HepG2 (cell line): ENCODE measurements at regions of chr16 and their contacts with region 1.

Region 1: DNA sequence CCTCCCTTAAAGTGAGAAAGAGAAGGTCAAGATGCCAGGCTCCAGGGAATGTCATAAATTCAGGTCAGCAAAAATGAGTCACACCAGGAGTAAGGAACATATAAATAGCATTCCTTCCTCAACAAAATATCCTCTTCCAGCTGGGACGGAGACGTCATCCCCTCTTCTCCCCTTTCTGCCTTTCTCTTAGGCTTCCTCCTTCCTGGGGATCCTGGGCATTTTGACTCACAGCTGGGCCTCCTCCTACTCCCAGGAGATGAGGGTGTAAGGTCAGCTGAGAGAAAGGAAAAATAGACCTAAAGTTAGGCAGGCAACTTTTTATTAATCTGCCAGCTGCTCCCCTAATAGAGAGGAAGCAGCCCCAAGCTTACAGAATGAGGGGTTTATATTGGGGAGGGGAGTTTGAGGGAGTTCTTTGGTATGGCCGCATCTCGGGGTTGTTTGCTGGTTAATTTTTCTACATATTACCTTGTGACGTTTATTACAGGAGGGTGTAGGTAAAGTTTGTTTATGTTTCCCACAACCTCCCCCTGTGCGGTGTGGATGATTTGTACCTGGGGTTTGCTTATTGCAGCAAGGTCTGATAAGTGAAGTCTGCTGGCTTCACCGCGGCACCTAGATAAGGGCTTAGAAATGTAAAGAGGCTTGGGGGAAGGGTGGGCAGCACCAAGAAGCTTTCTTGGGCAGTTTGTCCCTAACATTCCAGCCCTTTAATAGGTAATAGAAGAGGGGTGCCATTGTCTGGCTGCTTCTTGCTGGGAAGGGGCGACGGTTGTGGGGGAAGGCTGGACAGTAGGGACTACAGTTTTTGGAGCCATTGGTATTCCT is 7.1 kb upstream of the ZNF747 start:
- DNase-seq: peak; percentile 47
- ATAC-seq: peak; percentile 43
- H3K4me3 ChIP-seq: peak overlapping the region; percentile 48 to 63 (median 58)
- H3K27ac ChIP-seq: peak overlapping the region; percentile 62
- H3K4me1 ChIP-seq: peaks cover 72% of the 10 kb centered on the region
- H3K27me3 ChIP-seq: no peaks in the 10 kb centered on the region
- CTCF ChIP-seq: no peak
- EP300 ChIP-seq: no peak; a peak in 1 of 4 replicates
- POLR2A ChIP-seq: 0 out of 4 replicates have a peak, but pooled peaks of 1 of the 2 experiments have one; percentile 15
- RAD21 ChIP-seq: no peak

Region 2: DNA sequence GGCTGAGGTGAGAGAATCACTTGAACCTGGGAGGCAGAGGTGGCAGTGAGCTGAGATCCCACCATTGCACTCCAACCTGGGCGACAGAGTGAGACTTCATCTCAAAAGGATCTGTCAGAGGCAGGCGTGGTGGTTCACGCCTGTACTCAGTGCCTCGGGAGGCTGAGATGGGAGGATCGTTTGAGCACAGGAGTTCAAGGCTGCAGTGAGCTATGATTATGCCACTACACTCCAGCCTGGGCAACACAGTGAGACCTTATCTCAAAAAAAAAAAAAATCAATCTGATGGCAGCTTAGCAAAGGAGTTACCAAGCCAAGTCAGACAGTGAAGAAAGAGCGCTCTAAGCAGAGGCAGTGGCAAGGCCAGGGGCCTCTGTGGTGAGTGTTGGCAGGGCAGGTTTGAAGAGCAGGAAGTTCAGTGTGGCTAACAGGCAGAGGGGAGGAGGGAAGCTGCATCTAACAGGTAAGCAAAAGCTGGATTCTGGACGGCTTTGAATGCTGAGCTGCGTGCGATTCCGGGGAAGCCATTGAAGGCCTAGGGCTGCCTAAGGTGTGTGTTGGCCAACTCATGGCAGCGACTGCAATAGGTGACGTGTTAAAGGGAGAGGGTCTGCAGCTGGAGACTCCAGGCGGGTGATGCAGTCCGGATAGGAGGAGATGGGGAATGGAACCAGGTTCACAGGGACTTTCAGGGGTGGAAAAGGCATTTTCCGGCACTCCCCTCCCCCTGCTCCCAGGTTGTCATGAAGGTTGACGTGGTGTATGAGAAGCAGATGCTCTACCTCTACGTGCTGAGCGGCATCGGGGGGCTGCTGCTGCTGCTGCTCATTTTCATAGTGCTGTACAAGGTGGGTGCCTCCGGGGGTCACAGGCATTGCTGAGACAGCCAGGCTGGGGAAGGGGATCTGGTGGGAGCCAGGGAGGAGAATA is 22.3 kb before region 1 on chr16:
- CTCF ChIA-PET with region 1: no interaction called
- POLR2A ChIA-PET with region 1: no interaction called
- in situ Hi-C with region 1: no loop called
- intact Hi-C with region 1: no loop called
- DNase-seq: no peak
- ATAC-seq: peak; percentile 13
- H3K4me3 ChIP-seq: no peak overlapping the region
- H3K27ac ChIP-seq: no peak overlapping the region
- H3K4me1 ChIP-seq: peaks cover 54% of the 10 kb centered on the region
- H3K27me3 ChIP-seq: no peaks in the 10 kb centered on the region
- CTCF ChIP-seq: no peak
- EP300 ChIP-seq: no peak
- POLR2A ChIP-seq: no peak
- RAD21 ChIP-seq: no peak

Region 3: GRCh38 chr16:30551781-30552180 is 10.1 kb after region 1 on chr16:
- CTCF ChIA-PET with region 1: no interaction called
- POLR2A ChIA-PET with region 1: interaction called, 187 read pairs
- in situ Hi-C with region 1: no loop called
- intact Hi-C with region 1: no loop called
- DNase-seq: no peak
- ATAC-seq: no peak
- H3K4me3 ChIP-seq: no peak overlapping the region
- H3K27ac ChIP-seq: no peak overlapping the region
- H3K4me1 ChIP-seq: peaks cover 55% of the 10 kb centered on the region
- H3K27me3 ChIP-seq: no peaks in the 10 kb centered on the region
- CTCF ChIP-seq: no peak
- EP300 ChIP-seq: no peak
- POLR2A ChIP-seq: no peak; a peak in 1 of 4 replicates
- RAD21 ChIP-seq: no peak

Region 4: GRCh38 chr16:30581457-30581856 is 39.7 kb after region 1 on chr16:
- CTCF ChIA-PET with region 1: no interaction called
- POLR2A ChIA-PET with region 1: no interaction called
- in situ Hi-C with region 1: no loop called
- intact Hi-C with region 1: no loop called
- DNase-seq: no peak
- ATAC-seq: no peak
- H3K4me3 ChIP-seq: no peak overlapping the region
- H3K27ac ChIP-seq: no peak overlapping the region
- H3K4me1 ChIP-seq: peaks cover 7% of the 10 kb centered on the region
- H3K27me3 ChIP-seq: no peaks in the 10 kb centered on the region
- CTCF ChIP-seq: no peak
- EP300 ChIP-seq: no peak
- POLR2A ChIP-seq: no peak
- RAD21 ChIP-seq: no peak

Region 5: GRCh38 chr16:30615358-30616091 is 73.8 kb after region 1 on chr16:
- CTCF ChIA-PET with region 1: no interaction called
- POLR2A ChIA-PET with region 1: interaction called, 6 read pairs
- in situ Hi-C with region 1: no loop called
- intact Hi-C with region 1: loop called (anchors 5 kb)
- DNase-seq: peak; percentile 76
- ATAC-seq: peak; percentile 94
- H3K4me3 ChIP-seq: no peak overlapping the region
- H3K27ac ChIP-seq: no peak overlapping the region
- H3K4me1 ChIP-seq: peaks cover 58% of the 10 kb centered on the region
- H3K27me3 ChIP-seq: peaks cover 0 to 2% of the 10 kb centered on the region in 2 experiments; a peak in 1 of 5 replicates
- CTCF ChIP-seq: peak; percentile 100
- EP300 ChIP-seq: no peak
- POLR2A ChIP-seq: no peak
- RAD21 ChIP-seq: peak; percentile 97